CD4-positive, alpha-beta memory T cell (primary cell): ENCODE measurements at regions of chr11 and their contacts with region 1.

Region 1: GRCh38 chr11:62753736-62754603 is at the start of gene ZBTB3:
- DNase-seq: peak; percentile 99
- H3K4me3 ChIP-seq: peak within 1 kb of the TSS; percentile 68 to 98
- H3K4me3 Mint-ChIP-seq: peak within 1 kb of the TSS; percentile 96 to 99 (median 98)
- H3K27ac ChIP-seq: peak within 1 kb of the TSS; percentile 90
- H3K27ac Mint-ChIP-seq: peak within 1 kb of the TSS; percentile 94 to 100 (median 99)
- H3K4me1 ChIP-seq: peaks cover 45% of the 10 kb centered on the region
- H3K4me1 Mint-ChIP-seq: peaks cover 15 to 41% (median 25%) of the 10 kb centered on the region in 4 donors
- H3K27me3 ChIP-seq: no peaks in the 10 kb centered on the region
- H3K27me3 Mint-ChIP-seq: no peaks in the 10 kb centered on the region
- total RNA-seq, gene ZBTB3: 27.2 to 27.9 TPM

Region 2: GRCh38 chr11:62280452-62280851 is 473.5 kb before region 1 on chr11:
- CTCF ChIA-PET with region 1: no interaction called
- POLR2A ChIA-PET with region 1: no interaction called
- intact Hi-C with region 1: no loop called
- DNase-seq: no peak
- H3K4me3 ChIP-seq: no peak overlapping the region
- H3K4me3 Mint-ChIP-seq: no peak overlapping the region
- H3K27ac ChIP-seq: no peak overlapping the region
- H3K27ac Mint-ChIP-seq: no peak overlapping the region
- H3K4me1 ChIP-seq: no peaks in the 10 kb centered on the region
- H3K4me1 Mint-ChIP-seq: no peaks in the 10 kb centered on the region
- H3K27me3 ChIP-seq: peaks cover 9% of the 10 kb centered on the region
- H3K27me3 Mint-ChIP-seq: peaks cover 4 to 7% of the 10 kb centered on the region in 2 donors

Region 3: DNA sequence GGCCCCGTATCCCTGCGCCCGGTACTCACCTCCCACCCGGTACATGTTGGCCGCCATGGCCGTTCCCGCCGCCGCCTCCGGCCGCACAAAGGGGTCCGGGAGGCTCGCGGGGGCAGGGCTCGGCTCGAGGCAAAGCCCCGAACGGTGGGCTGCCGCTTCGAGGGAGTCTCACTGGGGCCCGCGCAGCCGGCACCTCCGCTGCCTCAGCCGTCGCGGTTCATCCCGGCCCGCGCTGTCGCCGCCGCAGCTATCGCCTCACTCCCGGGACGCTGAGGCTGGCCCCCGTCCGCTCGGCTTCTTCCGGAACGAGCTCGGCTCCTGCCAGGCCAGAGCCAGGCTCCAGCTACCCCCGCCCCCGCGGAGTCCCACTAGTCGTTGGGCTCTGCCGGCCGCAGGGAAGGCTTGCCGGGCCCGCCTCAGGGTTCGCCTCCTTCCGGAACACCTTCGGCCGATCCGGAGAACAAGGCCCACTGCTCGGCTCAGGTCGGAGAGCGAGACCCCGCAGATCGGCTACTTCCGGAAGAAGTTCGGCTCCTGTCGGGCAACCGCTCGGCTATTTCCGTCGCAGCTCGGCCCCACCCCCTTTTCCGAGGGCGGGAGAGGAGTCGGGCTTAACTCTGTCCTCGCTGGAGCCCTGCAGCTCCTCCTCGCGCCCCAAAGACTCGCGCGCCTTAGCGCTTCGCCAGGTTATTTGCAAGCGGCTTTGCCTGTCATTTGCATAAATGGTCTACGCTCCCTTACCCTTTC is 152.4 kb before region 1 on chr11 and contains the start of gene MTA2:
- CTCF ChIA-PET with region 1: no interaction called
- POLR2A ChIA-PET with region 1: interaction called, 11 read pairs
- intact Hi-C with region 1: no loop called
- DNase-seq: peak; percentile 99 to 100 (median 100)
- H3K4me3 ChIP-seq: peak within 1 kb of the TSS; percentile 71 to 82
- H3K4me3 Mint-ChIP-seq: peak within 1 kb of the TSS; percentile 91 to 99 (median 96)
- H3K27ac ChIP-seq: peak within 1 kb of the TSS; percentile 91
- H3K27ac Mint-ChIP-seq: peak within 1 kb of the TSS; percentile 90 to 99 (median 98)
- H3K4me1 ChIP-seq: peaks cover 35% of the 10 kb centered on the region
- H3K4me1 Mint-ChIP-seq: peaks cover 33 to 60% (median 46%) of the 10 kb centered on the region in 4 donors
- H3K27me3 ChIP-seq: no peaks in the 10 kb centered on the region
- H3K27me3 Mint-ChIP-seq: no peaks in the 10 kb centered on the region
- total RNA-seq, gene MTA2: 207 to 210 TPM

Region 4: GRCh38 chr11:62771144-62772021 is 17.4 kb after region 1 on chr11 and contains the start of gene TAF6L:
- CTCF ChIA-PET with region 1: interaction called, 7 read pairs
- POLR2A ChIA-PET with region 1: interaction called, 62 read pairs
- intact Hi-C with region 1: loop called (anchors 1 kb)
- DNase-seq: peak; percentile 86 to 92 (median 88)
- H3K4me3 ChIP-seq: peak within 1 kb of the TSS; percentile 67 to 83
- H3K4me3 Mint-ChIP-seq: peak within 1 kb of the TSS; percentile 87 to 97 (median 92)
- H3K27ac ChIP-seq: peak within 1 kb of the TSS; percentile 82
- H3K27ac Mint-ChIP-seq: peak within 1 kb of the TSS; percentile 92 to 99 (median 97)
- H3K4me1 ChIP-seq: peaks cover 24% of the 10 kb centered on the region
- H3K4me1 Mint-ChIP-seq: peaks cover 14 to 32% (median 22%) of the 10 kb centered on the region in 4 donors
- H3K27me3 ChIP-seq: no peaks in the 10 kb centered on the region
- H3K27me3 Mint-ChIP-seq: no peaks in the 10 kb centered on the region
- total RNA-seq, gene TAF6L: 26.3 to 34.0 TPM

Region 5: GRCh38 chr11:62787005-62787759 is 33.2 kb after region 1 on chr11 and contains the start of gene TMEM179B:
- CTCF ChIA-PET with region 1: interaction called, 32 read pairs
- POLR2A ChIA-PET with region 1: interaction called, 70 read pairs
- intact Hi-C with region 1: loop called (anchors 1 kb)
- DNase-seq: peak; percentile 95 to 99 (median 96)
- H3K4me3 ChIP-seq: peak within 1 kb of the TSS; percentile 73 to 95
- H3K4me3 Mint-ChIP-seq: peak within 1 kb of the TSS; percentile 93 to 97 (median 96)
- H3K27ac ChIP-seq: peak within 1 kb of the TSS; percentile 84
- H3K27ac Mint-ChIP-seq: peak within 1 kb of the TSS; percentile 89 to 98 (median 97)
- H3K4me1 ChIP-seq: peaks cover 45% of the 10 kb centered on the region
- H3K4me1 Mint-ChIP-seq: peaks cover 29 to 61% (median 47%) of the 10 kb centered on the region in 4 donors
- H3K27me3 ChIP-seq: no peaks in the 10 kb centered on the region
- H3K27me3 Mint-ChIP-seq: no peaks in the 10 kb centered on the region
- total RNA-seq, gene TMEM179B: 66.3 to 66.6 TPM

Region 6: GRCh38 chr11:62831520-62832335 is 77.8 kb after region 1 on chr11 and contains the start of gene STX5:
- CTCF ChIA-PET with region 1: no interaction called
- POLR2A ChIA-PET with region 1: interaction called, 23 read pairs
- intact Hi-C with region 1: loop called (anchors 1 kb)
- DNase-seq: peak; percentile 99 to 100 (median 100)
- H3K4me3 ChIP-seq: peak within 1 kb of the TSS; percentile 82 to 85
- H3K4me3 Mint-ChIP-seq: peak within 1 kb of the TSS; percentile 94 to 100 (median 98)
- H3K27ac ChIP-seq: peak within 1 kb of the TSS; percentile 97
- H3K27ac Mint-ChIP-seq: peak within 1 kb of the TSS; percentile 94 to 100 (median 99)
- H3K4me1 ChIP-seq: peaks cover 30% of the 10 kb centered on the region
- H3K4me1 Mint-ChIP-seq: peaks cover 21 to 59% (median 41%) of the 10 kb centered on the region in 4 donors
- H3K27me3 ChIP-seq: no peaks in the 10 kb centered on the region
- H3K27me3 Mint-ChIP-seq: no peaks in the 10 kb centered on the region
- total RNA-seq, gene STX5: 66.0 to 67.9 TPM

Region 7: GRCh38 chr11:62889484-62890437 is 135.8 kb after region 1 on chr11:
- CTCF ChIA-PET with region 1: no interaction called
- POLR2A ChIA-PET with region 1: no interaction called
- intact Hi-C with region 1: no loop called
- DNase-seq: no peak
- H3K4me3 ChIP-seq: no peak overlapping the region
- H3K4me3 Mint-ChIP-seq: no peak overlapping the region
- H3K27ac ChIP-seq: no peak overlapping the region
- H3K27ac Mint-ChIP-seq: peak overlapping the region in 4 of 7 donors; percentile 10 to 83 (median 45)
- H3K4me1 ChIP-seq: peaks cover 11% of the 10 kb centered on the region
- H3K4me1 Mint-ChIP-seq: peaks cover 2 to 11% (median 9%) of the 10 kb centered on the region in 4 donors
- H3K27me3 ChIP-seq: no peaks in the 10 kb centered on the region
- H3K27me3 Mint-ChIP-seq: peaks cover 0 to 2% of the 10 kb centered on the region in 2 donors